HEK293 (cell line): ENCODE measurements at regions of chr6 and their contacts with region 1.

Region 1: GRCh38 chr6:26596579-26597388 is at the start of gene ABT1:
- H3K4me3 ChIP-seq: peak within 1 kb of the TSS; percentile 82
- H3K27ac ChIP-seq: peak within 1 kb of the TSS; percentile 48
- H3K4me1 ChIP-seq: peaks cover 4% of the 10 kb centered on the region; the same call in 1 of the 2 replicates
- CTCF ChIP-seq: no peak

Region 2: DNA sequence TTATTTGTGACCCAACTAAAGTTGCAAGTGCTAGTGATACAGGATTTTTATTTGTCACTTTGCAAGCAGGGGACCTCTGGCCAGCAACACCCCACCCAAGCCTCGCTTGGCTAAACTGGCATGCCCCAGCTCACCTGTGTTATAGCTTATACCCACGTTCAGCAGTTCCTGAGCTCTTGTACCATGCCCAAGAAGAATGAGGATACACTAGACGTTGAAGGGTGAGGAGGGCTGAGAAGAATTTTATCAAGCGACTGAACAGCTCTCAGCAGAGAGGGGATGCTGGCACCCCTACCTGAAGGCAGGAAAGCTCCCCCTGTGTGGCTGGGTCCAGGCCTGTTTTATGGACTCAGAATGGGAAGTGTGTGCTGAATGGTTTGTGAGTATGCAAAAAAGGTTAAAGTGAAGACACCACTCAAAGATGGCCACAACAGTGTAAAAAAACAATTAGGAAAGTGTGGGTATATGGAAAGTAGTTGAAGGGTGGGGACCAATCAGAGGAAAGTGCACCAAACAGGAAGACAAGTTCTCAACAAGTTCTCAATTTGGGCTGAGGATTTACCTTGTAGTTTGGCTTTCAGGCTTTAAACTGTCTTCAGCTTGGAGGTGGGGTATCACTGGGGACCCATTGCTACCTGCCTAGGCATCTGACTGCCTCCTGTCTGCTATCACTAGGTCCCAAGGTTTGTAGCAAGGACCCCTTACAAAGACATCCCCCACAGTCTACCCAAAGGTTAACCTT is 124.1 kb before region 1 on chr6:
- CTCF ChIA-PET with region 1: no interaction called
- POLR2A ChIA-PET with region 1: no interaction called
- H3K4me3 ChIP-seq: no peak overlapping the region
- H3K27ac ChIP-seq: no peak overlapping the region
- H3K4me1 ChIP-seq: peaks cover 8% of the 10 kb centered on the region
- CTCF ChIP-seq: no peak

Region 3: GRCh38 chr6:26568601-26569432 is 28.0 kb before region 1 on chr6:
- CTCF ChIA-PET with region 1: interaction called, 152 read pairs
- POLR2A ChIA-PET with region 1: interaction called, 25 read pairs
- H3K4me3 ChIP-seq: peak overlapping the region; percentile 70
- H3K27ac ChIP-seq: peak overlapping the region; percentile 62
- H3K4me1 ChIP-seq: no peaks in the 10 kb centered on the region
- CTCF ChIP-seq: peak; percentile 70

Region 4: DNA sequence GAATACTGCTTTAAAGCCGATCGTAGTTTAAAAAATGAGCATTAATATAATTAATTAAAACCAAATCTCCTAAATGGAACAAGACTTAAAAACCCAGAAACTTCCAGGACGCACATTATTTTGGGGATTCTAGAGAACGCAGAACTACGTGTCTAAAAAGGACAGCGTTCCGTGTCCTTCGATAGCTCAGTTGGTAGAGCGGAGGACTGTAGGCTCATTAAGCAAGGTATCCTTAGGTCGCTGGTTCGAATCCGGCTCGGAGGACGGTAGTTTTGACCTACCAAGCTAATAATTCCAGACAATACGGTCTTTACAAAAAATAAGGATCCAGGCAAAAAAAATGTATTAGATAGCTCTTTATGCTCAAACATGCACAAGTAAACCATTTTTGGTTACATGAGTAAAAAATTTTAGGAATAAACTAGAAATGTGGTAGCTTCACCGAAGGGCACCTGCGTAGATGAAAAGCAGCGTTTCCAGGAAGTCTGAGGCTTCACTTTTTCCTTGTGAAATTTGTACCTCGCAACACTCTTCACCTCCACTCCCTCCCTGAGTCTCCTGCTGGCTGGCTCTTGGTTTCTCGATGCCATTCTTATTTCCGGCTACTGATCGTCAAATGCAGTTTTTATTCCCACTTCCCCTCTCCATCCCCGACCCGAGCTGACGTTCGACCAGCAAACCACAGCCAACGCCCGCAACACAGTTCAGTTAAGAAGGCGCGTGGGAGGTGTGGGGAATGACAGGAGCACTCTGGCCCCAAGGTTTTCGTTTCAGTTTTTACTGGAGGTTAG is 19.7 kb before region 1 on chr6:
- CTCF ChIA-PET with region 1: interaction called, 152 read pairs
- POLR2A ChIA-PET with region 1: interaction called, 25 read pairs
- H3K4me3 ChIP-seq: peak overlapping the region; percentile 34
- H3K27ac ChIP-seq: peak overlapping the region; percentile 11; the same call in 1 of the 2 replicates
- H3K4me1 ChIP-seq: no peaks in the 10 kb centered on the region
- CTCF ChIP-seq: no peak

Region 5: GRCh38 chr6:26640806-26641205 is 44.0 kb after region 1 on chr6:
- CTCF ChIA-PET with region 1: no interaction called
- POLR2A ChIA-PET with region 1: no interaction called
- H3K4me3 ChIP-seq: no peak overlapping the region
- H3K27ac ChIP-seq: no peak overlapping the region
- H3K4me1 ChIP-seq: no peaks in the 10 kb centered on the region
- CTCF ChIP-seq: no peak